B cell (primary cell): ENCODE measurements at regions of chr7 and their contacts with region 1.

Region 1: GRCh38 chr7:47818796-47819606 is 129.3 kb downstream of the PKD1L1 start:
- DNase-seq: peak; percentile 79
- ATAC-seq: peak; percentile 69
- H3K4me3 ChIP-seq: no peak overlapping the region
- H3K4me3 Mint-ChIP-seq: no peak overlapping the region
- H3K27ac ChIP-seq: no peak overlapping the region
- H3K27ac Mint-ChIP-seq: no peak overlapping the region
- H3K4me1 ChIP-seq: peaks cover 0 to under 1% of the 10 kb centered on the region in 2 donors
- H3K4me1 Mint-ChIP-seq: peaks cover 6% of the 10 kb centered on the region
- H3K27me3 ChIP-seq: no peaks in the 10 kb centered on the region
- H3K27me3 Mint-ChIP-seq: no peaks in the 10 kb centered on the region
- CTCF ChIP-seq: peak; percentile 99

Region 2: DNA sequence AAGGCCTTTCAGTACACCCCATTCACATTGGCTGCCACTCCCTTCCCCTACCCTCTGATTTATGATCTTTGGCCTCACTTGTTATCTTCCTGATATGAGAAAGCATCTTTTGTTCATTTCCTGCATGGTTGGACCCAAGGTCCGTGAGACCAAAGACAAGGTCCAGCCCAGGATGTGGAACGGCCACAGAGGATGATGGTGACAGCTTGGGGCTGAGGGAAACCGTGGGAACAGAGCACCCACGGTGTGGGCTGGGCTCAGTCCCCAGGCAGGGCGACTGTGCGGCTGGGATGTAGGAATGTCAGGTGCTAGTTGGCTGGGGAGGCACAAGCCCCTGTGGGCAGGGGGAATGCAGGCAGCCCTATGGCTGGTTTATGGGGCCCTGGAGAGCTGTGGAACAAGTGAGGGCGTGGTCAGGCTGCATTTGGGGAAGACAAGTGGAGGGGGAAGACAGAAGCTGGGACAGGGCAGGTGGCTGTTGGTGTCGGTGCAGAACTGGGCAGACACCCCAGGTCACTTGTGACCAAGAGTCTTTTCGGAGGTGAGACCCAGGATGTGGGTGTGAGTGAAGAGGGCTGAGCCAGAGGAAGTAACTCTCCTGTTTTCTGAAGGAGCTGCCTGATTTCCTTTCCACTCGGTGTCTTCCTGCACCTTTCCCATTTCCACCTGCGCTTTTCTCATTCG is 1846.2 kb before region 1 on chr7:
- CTCF ChIA-PET with region 1: no interaction called
- POLR2A ChIA-PET with region 1: no interaction called
- intact Hi-C with region 1: no loop called
- DNase-seq: no peak
- ATAC-seq: no peak
- H3K4me3 ChIP-seq: no peak overlapping the region
- H3K4me3 Mint-ChIP-seq: no peak overlapping the region
- H3K27ac ChIP-seq: no peak overlapping the region
- H3K27ac Mint-ChIP-seq: no peak overlapping the region
- H3K4me1 ChIP-seq: no peaks in the 10 kb centered on the region
- H3K4me1 Mint-ChIP-seq: no peaks in the 10 kb centered on the region
- H3K27me3 ChIP-seq: no peaks in the 10 kb centered on the region
- H3K27me3 Mint-ChIP-seq: peaks cover 4% of the 10 kb centered on the region
- CTCF ChIP-seq: no peak

Region 3: GRCh38 chr7:47435889-47436312 is 383.1 kb before region 1 on chr7:
- CTCF ChIA-PET with region 1: interaction called, 31 read pairs
- POLR2A ChIA-PET with region 1: no interaction called
- intact Hi-C with region 1: loop called (anchors 1 kb)
- DNase-seq: peak; percentile 22
- ATAC-seq: no peak
- H3K4me3 ChIP-seq: no peak overlapping the region
- H3K4me3 Mint-ChIP-seq: no peak overlapping the region
- H3K27ac ChIP-seq: no peak overlapping the region
- H3K27ac Mint-ChIP-seq: no peak overlapping the region
- H3K4me1 ChIP-seq: no peaks in the 10 kb centered on the region
- H3K4me1 Mint-ChIP-seq: no peaks in the 10 kb centered on the region
- H3K27me3 ChIP-seq: no peaks in the 10 kb centered on the region
- H3K27me3 Mint-ChIP-seq: no peaks in the 10 kb centered on the region
- CTCF ChIP-seq: no peak

Region 4: GRCh38 chr7:47482013-47482875 is 336.8 kb before region 1 on chr7:
- CTCF ChIA-PET with region 1: interaction called, 14 read pairs
- POLR2A ChIA-PET with region 1: interaction called, 3 read pairs
- intact Hi-C with region 1: loop called (anchors 2 kb)
- DNase-seq: no peak
- ATAC-seq: peak; percentile 60
- H3K4me3 ChIP-seq: no peak overlapping the region
- H3K4me3 Mint-ChIP-seq: peak overlapping the region; percentile 72
- H3K27ac ChIP-seq: no peak overlapping the region
- H3K27ac Mint-ChIP-seq: peak overlapping the region; percentile 87
- H3K4me1 ChIP-seq: peaks cover 39 to 44% of the 10 kb centered on the region in 2 donors
- H3K4me1 Mint-ChIP-seq: peaks cover 64% of the 10 kb centered on the region
- H3K27me3 ChIP-seq: no peaks in the 10 kb centered on the region
- H3K27me3 Mint-ChIP-seq: no peaks in the 10 kb centered on the region
- CTCF ChIP-seq: no peak

Region 5: GRCh38 chr7:47610506-47611044 is 208.4 kb before region 1 on chr7:
- CTCF ChIA-PET with region 1: no interaction called
- POLR2A ChIA-PET with region 1: no interaction called
- intact Hi-C with region 1: no loop called
- DNase-seq: no peak
- ATAC-seq: no peak
- H3K4me3 ChIP-seq: no peak overlapping the region
- H3K4me3 Mint-ChIP-seq: no peak overlapping the region
- H3K27ac ChIP-seq: no peak overlapping the region
- H3K27ac Mint-ChIP-seq: no peak overlapping the region
- H3K4me1 ChIP-seq: no peaks in the 10 kb centered on the region
- H3K4me1 Mint-ChIP-seq: no peaks in the 10 kb centered on the region
- H3K27me3 ChIP-seq: no peaks in the 10 kb centered on the region
- H3K27me3 Mint-ChIP-seq: no peaks in the 10 kb centered on the region
- CTCF ChIP-seq: no peak

Region 6: DNA sequence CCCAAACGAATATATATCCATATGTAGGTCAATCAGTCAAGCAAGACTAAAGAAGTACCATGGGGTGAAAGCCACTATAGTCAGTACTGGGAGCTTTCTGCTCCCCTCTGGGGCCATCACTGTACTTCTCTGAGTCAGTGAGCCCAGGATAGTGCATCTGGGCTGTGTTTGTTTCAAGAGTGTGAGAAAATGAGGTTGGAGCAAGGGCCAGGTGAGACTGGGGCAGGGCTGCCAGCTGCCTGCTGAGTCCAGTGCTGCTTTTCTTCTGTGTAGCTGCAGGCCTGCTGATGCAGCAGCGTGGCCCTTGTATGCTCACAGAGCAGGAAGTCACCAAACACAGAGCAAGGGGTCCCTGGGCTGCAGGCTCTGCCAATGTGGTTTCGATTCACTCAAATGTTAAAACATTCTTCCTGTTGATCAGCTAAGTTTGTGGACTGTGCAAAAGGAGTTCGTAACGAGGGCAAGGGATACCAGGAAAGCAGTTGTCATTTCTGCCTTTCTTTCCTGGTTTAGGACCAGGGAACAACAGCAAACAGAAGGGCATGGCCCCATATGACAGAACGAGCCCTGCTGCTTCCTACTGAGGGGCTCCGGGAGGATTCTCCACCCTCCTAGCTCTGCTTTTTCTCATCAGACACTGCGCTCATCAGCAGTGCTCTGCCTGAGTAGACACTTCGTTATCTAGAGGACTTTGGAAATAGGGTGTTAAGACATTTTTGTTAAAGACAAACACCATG is 171.7 kb before region 1 on chr7:
- CTCF ChIA-PET with region 1: interaction called, 13 read pairs
- POLR2A ChIA-PET with region 1: no interaction called
- intact Hi-C with region 1: no loop called
- DNase-seq: peak; percentile 59
- ATAC-seq: peak; percentile 93
- H3K4me3 ChIP-seq: peak overlapping the region in 2 of 5 experiments; percentile 4 to 47
- H3K4me3 Mint-ChIP-seq: peak overlapping the region; percentile 76
- H3K27ac ChIP-seq: peak overlapping the region; percentile 3 to 16
- H3K27ac Mint-ChIP-seq: peak overlapping the region; percentile 89
- H3K4me1 ChIP-seq: peaks cover 22 to 34% of the 10 kb centered on the region in 2 donors
- H3K4me1 Mint-ChIP-seq: peaks cover 39% of the 10 kb centered on the region
- H3K27me3 ChIP-seq: no peaks in the 10 kb centered on the region
- H3K27me3 Mint-ChIP-seq: no peaks in the 10 kb centered on the region
- CTCF ChIP-seq: no peak

Region 7: DNA sequence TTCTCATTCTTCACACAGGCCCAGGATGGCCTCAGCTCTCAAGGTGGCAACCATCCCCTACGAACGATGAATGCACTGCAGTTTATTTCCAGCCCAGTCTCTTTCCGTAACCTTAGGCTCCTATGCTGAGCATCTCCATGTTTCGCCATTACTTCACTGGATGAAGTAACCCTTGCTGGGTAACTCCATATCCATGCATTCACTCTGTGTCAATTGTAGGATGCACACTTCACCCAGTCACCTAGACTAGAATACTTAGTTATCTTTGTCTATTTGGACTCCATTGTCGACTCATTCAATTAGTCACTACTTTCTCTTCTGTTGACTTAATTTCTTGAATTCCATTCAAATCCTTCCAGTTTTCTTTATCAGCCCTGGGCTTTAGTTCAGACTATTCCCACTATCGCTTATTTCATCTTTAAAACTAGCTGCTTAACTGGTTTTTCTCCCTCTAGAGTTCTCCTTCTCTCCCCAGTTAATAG is 125.8 kb before region 1 on chr7:
- CTCF ChIA-PET with region 1: no interaction called
- POLR2A ChIA-PET with region 1: no interaction called
- intact Hi-C with region 1: no loop called
- DNase-seq: no peak
- ATAC-seq: no peak
- H3K4me3 ChIP-seq: no peak overlapping the region
- H3K4me3 Mint-ChIP-seq: no peak overlapping the region
- H3K27ac ChIP-seq: no peak overlapping the region
- H3K27ac Mint-ChIP-seq: no peak overlapping the region
- H3K4me1 ChIP-seq: no peaks in the 10 kb centered on the region
- H3K4me1 Mint-ChIP-seq: peaks cover 4% of the 10 kb centered on the region
- H3K27me3 ChIP-seq: no peaks in the 10 kb centered on the region
- H3K27me3 Mint-ChIP-seq: no peaks in the 10 kb centered on the region
- CTCF ChIP-seq: no peak

Region 8: GRCh38 chr7:47807756-47808155 is 11.2 kb before region 1 on chr7:
- CTCF ChIA-PET with region 1: interaction called, 23 read pairs
- POLR2A ChIA-PET with region 1: no interaction called
- intact Hi-C with region 1: no loop called
- DNase-seq: peak; percentile 67
- ATAC-seq: peak; percentile 77
- H3K4me3 ChIP-seq: no peak overlapping the region
- H3K4me3 Mint-ChIP-seq: no peak overlapping the region
- H3K27ac ChIP-seq: no peak overlapping the region
- H3K27ac Mint-ChIP-seq: no peak overlapping the region
- H3K4me1 ChIP-seq: peaks cover 16 to 25% of the 10 kb centered on the region in 2 donors
- H3K4me1 Mint-ChIP-seq: peaks cover 43% of the 10 kb centered on the region
- H3K27me3 ChIP-seq: no peaks in the 10 kb centered on the region
- H3K27me3 Mint-ChIP-seq: no peaks in the 10 kb centered on the region
- CTCF ChIP-seq: no peak